Activated CD4-positive, alpha-beta T cell treated with anti-CD3 and anti-CD28 coated beads, Interleukin-2, amount 10 ng/mL, durations not matched to agents 24 days and 14 days (primary cell): ENCODE measurements at regions of chr11 and their contacts with region 1.

Region 1: GRCh38 chr11:2444821-2445745 is at the start of gene KCNQ1:
- DNase-seq: peak; percentile 90
- H3K4me3 Mint-ChIP-seq: peak within 1 kb of the TSS; percentile 91
- H3K27ac Mint-ChIP-seq: peak within 1 kb of the TSS; percentile 64
- H3K4me1 Mint-ChIP-seq: peaks cover 13% of the 10 kb centered on the region
- H3K27me3 Mint-ChIP-seq: peaks cover 19% of the 10 kb centered on the region
- total RNA-seq, gene KCNQ1: 6.4 TPM in 2 replicates

Region 2: GRCh38 chr11:2214527-2215229 is 230.4 kb before region 1 on chr11:
- intact Hi-C with region 1: no loop called
- DNase-seq: no peak
- H3K4me3 Mint-ChIP-seq: no peak overlapping the region
- H3K27ac Mint-ChIP-seq: peak overlapping the region; percentile 12
- H3K4me1 Mint-ChIP-seq: peaks cover 8% of the 10 kb centered on the region
- H3K27me3 Mint-ChIP-seq: no peaks in the 10 kb centered on the region

Region 3: GRCh38 chr11:2377511-2378443 is 67.3 kb before region 1 on chr11:
- intact Hi-C with region 1: loop called (anchors 2 kb)
- DNase-seq: peak; percentile 87
- H3K4me3 Mint-ChIP-seq: peak overlapping the region; percentile 93
- H3K27ac Mint-ChIP-seq: peak overlapping the region; percentile 86
- H3K4me1 Mint-ChIP-seq: peaks cover 18% of the 10 kb centered on the region
- H3K27me3 Mint-ChIP-seq: peaks cover 2% of the 10 kb centered on the region

Region 4: DNA sequence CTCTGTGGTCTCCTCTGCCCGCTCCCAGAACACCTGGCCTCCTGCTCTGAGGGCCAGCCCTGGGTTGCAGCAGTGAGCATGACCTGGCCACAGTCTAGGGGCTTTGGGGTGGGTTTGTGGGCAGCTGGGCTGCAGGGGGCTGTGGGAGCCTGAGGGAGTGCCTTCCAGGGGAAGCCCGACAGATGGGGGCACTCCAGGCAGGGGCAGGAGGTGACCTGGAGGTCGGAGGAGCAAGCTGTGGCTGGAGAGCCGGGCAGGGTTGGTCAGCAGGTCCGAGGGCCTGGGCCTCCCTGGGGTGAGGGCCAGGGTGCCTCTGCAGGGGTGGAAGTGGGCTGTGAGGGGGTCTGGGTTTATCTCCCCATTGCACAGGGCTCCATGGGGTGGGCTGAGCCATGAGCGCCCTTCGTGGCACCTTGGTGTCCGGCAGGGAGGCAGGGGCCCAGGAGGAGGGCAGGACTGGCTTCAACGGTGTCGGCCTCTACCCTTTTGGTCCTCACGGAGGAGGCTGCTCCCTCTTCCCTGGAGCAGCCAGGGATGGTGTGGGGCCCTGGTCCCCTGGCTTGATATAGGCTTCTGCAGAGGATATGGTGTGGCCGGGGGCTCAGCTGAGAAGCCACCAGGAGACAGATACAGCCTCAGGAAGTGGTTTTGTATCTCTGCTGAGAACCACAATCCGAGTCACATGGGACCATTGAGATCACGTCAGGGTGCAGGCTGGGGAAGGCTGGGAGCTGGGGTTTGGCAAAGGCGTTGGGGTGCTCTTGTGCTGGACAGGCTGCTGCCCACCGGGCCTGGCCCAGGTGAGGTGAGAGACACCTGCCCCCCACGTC is 22.0 kb after region 1 on chr11:
- intact Hi-C with region 1: loop called (anchors 2 kb)
- DNase-seq: peak; percentile 91
- H3K4me3 Mint-ChIP-seq: peak overlapping the region; percentile 68
- H3K27ac Mint-ChIP-seq: peak overlapping the region; percentile 60
- H3K4me1 Mint-ChIP-seq: peaks cover 22% of the 10 kb centered on the region
- H3K27me3 Mint-ChIP-seq: peaks cover 5% of the 10 kb centered on the region